ENCODE measurements at regions of chr3 and their contacts with region 1.

Region 1: DNA sequence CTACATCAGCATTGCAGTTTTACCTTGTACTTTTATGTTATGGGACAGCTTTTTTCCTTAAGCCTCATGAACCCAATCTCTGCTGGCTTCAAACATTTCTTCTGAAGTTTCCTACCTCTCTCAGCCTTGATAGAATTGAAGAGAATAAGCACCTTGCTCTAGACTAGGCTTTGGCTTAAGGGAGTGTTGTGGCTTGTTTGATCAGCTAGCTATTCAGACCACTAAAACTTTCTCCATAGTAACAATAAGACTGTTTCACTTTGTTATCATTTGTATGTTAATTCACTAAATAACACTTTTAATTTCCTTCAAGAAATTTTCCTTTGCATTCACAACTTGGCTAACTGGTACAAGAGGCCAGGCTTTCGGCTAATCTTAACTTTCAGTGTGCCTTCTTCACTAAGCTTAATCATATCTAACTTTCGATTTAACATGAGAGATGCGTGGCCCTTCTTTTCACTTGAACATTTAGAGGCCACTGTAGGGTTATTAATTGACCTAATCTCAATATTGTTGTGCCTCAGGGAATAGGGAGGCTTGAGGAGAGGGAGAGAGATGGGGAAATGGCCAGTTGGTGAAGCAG is 8.1 kb upstream of the TIGIT start:
- DNase-seq: peak in 3 of 5 donors; percentile 29 to 43 (median 37)
- H3K4me3 ChIP-seq: peak overlapping the region in 1 of 2 donors; percentile 21
- H3K4me3 Mint-ChIP-seq: peak overlapping the region; percentile 21 to 88 (median 86)
- H3K27ac ChIP-seq: peak overlapping the region; percentile 50
- H3K27ac Mint-ChIP-seq: peak overlapping the region; percentile 90 to 96 (median 95)
- H3K4me1 ChIP-seq: peaks cover 25% of the 10 kb centered on the region
- H3K4me1 Mint-ChIP-seq: peaks cover 11 to 29% (median 24%) of the 10 kb centered on the region in 4 donors
- H3K27me3 ChIP-seq: no peaks in the 10 kb centered on the region
- H3K27me3 Mint-ChIP-seq: no peaks in the 10 kb centered on the region

Region 2: GRCh38 chr3:114223143-114223542 is 62.6 kb before region 1 on chr3:
- CTCF ChIA-PET with region 1: interaction called, 138 read pairs
- POLR2A ChIA-PET with region 1: interaction called, 309 read pairs
- intact Hi-C with region 1: loop called (anchors 2 kb)
- DNase-seq: peak; percentile 55 to 69 (median 56)
- H3K4me3 ChIP-seq: no peak overlapping the region
- H3K4me3 Mint-ChIP-seq: peak overlapping the region in 5 of 8 donors; percentile 31 to 78 (median 62)
- H3K27ac ChIP-seq: peak overlapping the region; percentile 51
- H3K27ac Mint-ChIP-seq: peak overlapping the region; percentile 78 to 96 (median 92)
- H3K4me1 ChIP-seq: peaks cover 98% of the 10 kb centered on the region
- H3K4me1 Mint-ChIP-seq: peaks cover 0 to 71% (median 32%) of the 10 kb centered on the region in 4 donors
- H3K27me3 ChIP-seq: no peaks in the 10 kb centered on the region
- H3K27me3 Mint-ChIP-seq: no peaks in the 10 kb centered on the region

Region 3: DNA sequence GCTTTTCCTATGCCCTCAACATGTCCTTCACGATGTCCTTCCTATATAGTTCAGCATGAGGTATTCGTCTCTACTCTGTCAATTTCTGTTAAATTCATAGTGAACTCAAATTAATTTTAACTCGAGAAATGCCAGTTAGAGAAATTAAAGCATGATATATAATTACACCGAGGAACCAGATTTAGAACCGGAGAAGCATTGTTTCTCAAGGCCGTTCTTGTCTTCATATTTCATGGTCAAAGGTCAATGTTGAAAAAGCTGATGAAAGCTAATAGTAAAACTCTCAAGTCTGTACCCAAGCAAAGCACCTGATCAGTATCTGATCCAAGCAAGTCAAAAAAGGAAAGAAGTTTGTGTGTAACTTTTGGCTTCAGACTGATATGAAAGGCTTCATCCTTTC is 697.5 kb after region 1 on chr3:
- CTCF ChIA-PET with region 1: no interaction called
- POLR2A ChIA-PET with region 1: no interaction called
- intact Hi-C with region 1: no loop called
- DNase-seq: no peak
- H3K4me3 ChIP-seq: no peak overlapping the region
- H3K4me3 Mint-ChIP-seq: no peak overlapping the region
- H3K27ac ChIP-seq: no peak overlapping the region
- H3K27ac Mint-ChIP-seq: no peak overlapping the region
- H3K4me1 ChIP-seq: no peaks in the 10 kb centered on the region
- H3K4me1 Mint-ChIP-seq: peaks cover 0 to 19% (median 11%) of the 10 kb centered on the region in 4 donors
- H3K27me3 ChIP-seq: no peaks in the 10 kb centered on the region
- H3K27me3 Mint-ChIP-seq: no peaks in the 10 kb centered on the region

Measured in CD4-positive, alpha-beta memory T cell (primary cell).